AG04450 (cell line): ENCODE measurements at regions of chr1 and their contacts with region 1.

Region 1: GRCh38 chr1:53196485-53197270 is at the start of gene CPT2:
- DNase-seq: peak; percentile 77
- H3K4me3 ChIP-seq: peak within 1 kb of the TSS; percentile 80
- H3K27ac ChIP-seq: no peak within 1 kb of the TSS
- H3K27me3 ChIP-seq: no peaks in the 10 kb centered on the region
- CTCF ChIP-seq: 0 out of 2 replicates have a peak, but pooled peaks have one; percentile 24
- polyA plus RNA-seq, gene CPT2: 17.6 and 18.8 TPM in 2 replicates

Region 2: DNA sequence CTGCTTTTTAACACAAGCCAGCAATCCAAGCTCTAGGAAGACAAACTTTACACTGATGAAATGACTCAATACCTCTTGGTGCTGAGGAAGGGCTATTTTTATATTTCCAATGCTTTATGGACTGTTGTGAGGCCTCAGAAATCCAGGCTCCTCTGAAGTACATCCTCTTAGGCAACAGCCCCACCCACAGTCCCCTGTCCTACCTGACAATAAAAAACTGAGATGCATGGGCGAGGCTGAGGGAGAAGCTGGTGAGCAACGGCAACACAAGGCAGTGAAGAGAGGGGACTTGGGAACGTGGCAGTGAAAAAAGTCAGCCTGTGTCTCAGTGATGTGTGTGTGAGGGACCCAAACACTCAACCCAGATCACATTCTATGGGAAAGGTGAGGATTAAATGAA is 10.1 kb before region 1 on chr1:
- CTCF ChIA-PET with region 1: interaction called, 11 read pairs
- POLR2A ChIA-PET with region 1: interaction called, 4 read pairs
- DNase-seq: no peak
- H3K4me3 ChIP-seq: no peak overlapping the region
- H3K27ac ChIP-seq: no peak overlapping the region
- H3K27me3 ChIP-seq: no peaks in the 10 kb centered on the region
- CTCF ChIP-seq: no peak